ENCODE measurements at regions of chr2 and their contacts with region 1.

Region 1: GRCh38 chr2:47767880-47768609 is 14.9 kb upstream of the MSH6 start:
- DNase-seq: peak; percentile 74
- ATAC-seq: peak; percentile 83
- H3K4me3 Mint-ChIP-seq: peak overlapping the region; percentile 37
- H3K27ac Mint-ChIP-seq: no peak overlapping the region
- H3K4me1 Mint-ChIP-seq: peaks cover 8% of the 10 kb centered on the region
- H3K27me3 Mint-ChIP-seq: peaks cover 3% of the 10 kb centered on the region

Region 2: DNA sequence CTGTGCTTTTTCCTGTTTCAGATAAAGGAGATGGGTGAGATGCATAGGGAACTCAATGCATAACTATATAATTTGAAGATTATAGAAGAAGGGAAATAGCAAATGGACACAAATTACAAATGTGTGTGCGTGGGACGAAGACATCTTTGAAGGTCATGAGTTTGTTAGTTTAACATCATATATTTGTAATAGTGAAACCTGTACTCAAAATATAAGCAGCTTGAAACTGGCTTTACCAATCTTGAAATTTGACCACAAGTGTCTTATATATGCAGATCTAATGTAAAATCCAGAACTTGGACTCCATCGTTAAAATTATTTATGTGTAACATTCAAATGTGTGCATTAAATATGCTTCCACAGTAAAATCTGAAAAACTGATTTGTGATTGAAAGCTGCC is 381.5 kb before region 1 on chr2:
- CTCF ChIA-PET with region 1: interaction called, 11 read pairs
- POLR2A ChIA-PET with region 1: no interaction called
- DNase-seq: no peak
- ATAC-seq: no peak
- H3K4me3 Mint-ChIP-seq: no peak overlapping the region
- H3K27ac Mint-ChIP-seq: no peak overlapping the region
- H3K4me1 Mint-ChIP-seq: no peaks in the 10 kb centered on the region
- H3K27me3 Mint-ChIP-seq: peaks cover 14% of the 10 kb centered on the region

Region 3: GRCh38 chr2:47437287-47437686 is 330.8 kb before region 1 on chr2:
- CTCF ChIA-PET with region 1: interaction called, 22 read pairs
- POLR2A ChIA-PET with region 1: no interaction called
- DNase-seq: no peak
- ATAC-seq: no peak
- H3K4me3 Mint-ChIP-seq: no peak overlapping the region
- H3K27ac Mint-ChIP-seq: no peak overlapping the region
- H3K4me1 Mint-ChIP-seq: no peaks in the 10 kb centered on the region
- H3K27me3 Mint-ChIP-seq: no peaks in the 10 kb centered on the region

Region 4: GRCh38 chr2:47741094-47741493 is 27.0 kb before region 1 on chr2:
- CTCF ChIA-PET with region 1: interaction called, 15 read pairs
- POLR2A ChIA-PET with region 1: no interaction called
- DNase-seq: no peak
- ATAC-seq: no peak
- H3K4me3 Mint-ChIP-seq: no peak overlapping the region
- H3K27ac Mint-ChIP-seq: no peak overlapping the region
- H3K4me1 Mint-ChIP-seq: no peaks in the 10 kb centered on the region
- H3K27me3 Mint-ChIP-seq: peaks cover 12% of the 10 kb centered on the region

Region 5: GRCh38 chr2:47782671-47783485 is 14.8 kb after region 1 on chr2 and contains the start of gene MSH6:
- CTCF ChIA-PET with region 1: interaction called, 49 read pairs
- POLR2A ChIA-PET with region 1: interaction called, 5 read pairs
- DNase-seq: peak; percentile 90
- ATAC-seq: peak; percentile 89
- H3K4me3 Mint-ChIP-seq: peak within 1 kb of the TSS; percentile 85
- H3K27ac Mint-ChIP-seq: peak within 1 kb of the TSS; percentile 92
- H3K4me1 Mint-ChIP-seq: peaks cover 22% of the 10 kb centered on the region
- H3K27me3 Mint-ChIP-seq: no peaks in the 10 kb centered on the region
- total RNA-seq, gene MSH6: 96.4 to 107 TPM

Region 6: DNA sequence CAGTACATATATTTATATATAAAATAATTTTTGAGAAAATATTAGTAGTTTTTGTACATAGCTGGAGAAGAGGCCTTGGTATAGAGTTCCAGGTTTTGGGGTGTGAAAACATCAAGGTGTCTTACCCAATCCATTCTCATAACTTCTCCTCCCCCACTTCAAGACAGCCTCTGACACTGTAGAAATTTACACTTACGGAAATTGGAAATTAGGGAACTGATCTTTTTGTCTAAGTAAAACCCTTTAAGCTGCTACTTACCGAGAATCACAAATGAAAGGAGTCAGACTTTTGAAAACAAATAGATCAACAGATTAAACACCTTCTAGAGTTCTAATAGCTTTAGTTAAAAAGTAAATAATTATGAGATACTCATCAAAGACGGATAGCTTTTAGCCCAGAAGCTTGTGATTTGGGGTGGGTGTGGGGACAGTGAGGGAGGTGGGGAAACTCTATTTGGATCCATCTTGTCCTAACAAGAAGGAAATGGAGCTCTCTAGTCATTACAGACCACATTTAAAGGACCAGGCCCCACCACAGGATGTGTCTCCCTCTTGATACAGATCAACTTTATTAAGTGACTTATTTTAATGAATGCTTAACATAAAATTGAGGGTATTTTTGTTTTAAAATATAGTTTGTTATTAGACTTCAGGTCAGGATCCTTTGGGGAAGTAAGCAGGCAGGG is 149.4 kb after region 1 on chr2:
- CTCF ChIA-PET with region 1: no interaction called
- POLR2A ChIA-PET with region 1: no interaction called
- DNase-seq: no peak
- ATAC-seq: no peak
- H3K4me3 Mint-ChIP-seq: no peak overlapping the region
- H3K27ac Mint-ChIP-seq: no peak overlapping the region
- H3K4me1 Mint-ChIP-seq: peaks cover 5% of the 10 kb centered on the region
- H3K27me3 Mint-ChIP-seq: no peaks in the 10 kb centered on the region

Measured in activated CD8-positive, alpha-beta T cell treated with anti-CD3 and anti-CD28 coated beads, Interleukin-2, amount 10 ng/mL, durations not matched to agents 7 days and 5 days (primary cell).